ENCODE measurements at regions of chr6 and their contacts with region 1.

Region 1: DNA sequence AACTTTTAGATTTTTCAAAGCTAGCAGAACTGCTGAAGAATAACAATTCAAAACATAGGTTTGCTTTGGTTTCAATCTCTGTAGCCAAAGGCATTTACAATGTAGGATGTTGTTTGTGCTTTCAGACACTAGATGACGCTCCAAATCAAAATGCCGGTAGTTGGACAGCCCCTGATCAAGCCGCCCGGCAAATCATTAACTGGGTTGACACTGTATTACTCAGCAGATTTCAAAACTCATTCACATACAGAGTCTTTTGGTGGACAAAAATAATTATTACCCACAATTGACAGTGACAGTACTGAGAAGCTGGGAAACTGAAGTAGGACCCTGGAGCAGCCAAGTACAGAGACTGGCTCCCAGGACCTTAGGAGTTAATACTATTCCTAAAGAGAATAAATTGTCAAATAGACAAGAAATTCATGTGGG is 21.3 kb upstream of the HFE start:
- DNase-seq: peak; percentile 94

Region 2: GRCh38 chr6:25874822-25875562 is 191.0 kb before region 1 on chr6:
- in situ Hi-C with region 1: no loop called
- DNase-seq: no peak

Region 3: DNA sequence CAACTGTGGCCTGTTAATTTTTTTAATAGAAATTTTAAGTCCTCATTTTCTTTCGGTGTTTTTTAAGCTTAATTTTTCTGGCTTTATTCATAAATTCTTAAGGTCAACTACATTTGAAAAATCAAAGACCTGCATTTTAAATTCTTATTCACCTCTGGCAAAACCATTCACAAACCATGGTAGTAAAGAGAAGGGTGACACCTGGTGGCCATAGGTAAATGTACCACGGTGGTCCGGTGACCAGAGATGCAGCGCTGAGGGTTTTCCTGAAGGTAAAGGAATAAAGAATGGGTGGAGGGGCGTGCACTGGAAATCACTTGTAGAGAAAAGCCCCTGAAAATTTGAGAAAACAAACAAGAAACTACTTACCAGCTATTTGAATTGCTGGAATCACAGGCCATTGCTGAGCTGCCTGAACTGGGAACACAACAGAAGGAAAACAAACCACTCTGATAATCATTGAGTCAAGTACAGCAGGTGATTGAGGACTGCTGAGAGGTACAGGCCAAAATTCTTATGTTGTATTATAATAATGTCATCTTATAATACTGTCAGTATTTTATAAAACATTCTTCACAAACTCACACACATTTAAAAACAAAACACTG is 31.4 kb after region 1 on chr6:
- in situ Hi-C with region 1: loop called (anchors 5 kb)
- DNase-seq: peak; percentile 84

Region 4: GRCh38 chr6:26159357-26160273 is 93.6 kb after region 1 on chr6:
- in situ Hi-C with region 1: loop called (anchors 10 kb)
- DNase-seq: no peak